Right cardiac atrium (tissue), 5 donors: ENCODE measurements at regions of chr2 and their contacts with region 1.

Region 1: GRCh38 chr2:120343433-120344105 is 2.4 kb upstream of the INHBB start:
- DNase-seq: peak; percentile 87 to 94 (median 94)
- ATAC-seq: peak; percentile 87 to 89
- H3K4me3 ChIP-seq: peak overlapping the region; percentile 71
- H3K27ac ChIP-seq: no peak overlapping the region
- H3K4me1 ChIP-seq: peaks cover 1% of the 10 kb centered on the region
- H3K27me3 ChIP-seq: no peaks in the 10 kb centered on the region

Region 2: GRCh38 chr2:120470041-120470965 is 126.7 kb after region 1 on chr2:
- intact Hi-C with region 1: no loop called
- DNase-seq: peak; percentile 83 to 93 (median 90)
- ATAC-seq: peak; percentile 87 to 95
- H3K4me3 ChIP-seq: no peak overlapping the region
- H3K27ac ChIP-seq: peak overlapping the region; percentile 79
- H3K4me1 ChIP-seq: peaks cover 12% of the 10 kb centered on the region
- H3K27me3 ChIP-seq: no peaks in the 10 kb centered on the region

Region 3: GRCh38 chr2:120511947-120512710 is 168.6 kb after region 1 on chr2:
- intact Hi-C with region 1: loop called in 1 of 4 experiments (anchors 10 kb)
- DNase-seq: no peak
- ATAC-seq: no peak
- H3K4me3 ChIP-seq: no peak overlapping the region
- H3K27ac ChIP-seq: no peak overlapping the region
- H3K4me1 ChIP-seq: peaks cover 6% of the 10 kb centered on the region
- H3K27me3 ChIP-seq: no peaks in the 10 kb centered on the region

Region 4: DNA sequence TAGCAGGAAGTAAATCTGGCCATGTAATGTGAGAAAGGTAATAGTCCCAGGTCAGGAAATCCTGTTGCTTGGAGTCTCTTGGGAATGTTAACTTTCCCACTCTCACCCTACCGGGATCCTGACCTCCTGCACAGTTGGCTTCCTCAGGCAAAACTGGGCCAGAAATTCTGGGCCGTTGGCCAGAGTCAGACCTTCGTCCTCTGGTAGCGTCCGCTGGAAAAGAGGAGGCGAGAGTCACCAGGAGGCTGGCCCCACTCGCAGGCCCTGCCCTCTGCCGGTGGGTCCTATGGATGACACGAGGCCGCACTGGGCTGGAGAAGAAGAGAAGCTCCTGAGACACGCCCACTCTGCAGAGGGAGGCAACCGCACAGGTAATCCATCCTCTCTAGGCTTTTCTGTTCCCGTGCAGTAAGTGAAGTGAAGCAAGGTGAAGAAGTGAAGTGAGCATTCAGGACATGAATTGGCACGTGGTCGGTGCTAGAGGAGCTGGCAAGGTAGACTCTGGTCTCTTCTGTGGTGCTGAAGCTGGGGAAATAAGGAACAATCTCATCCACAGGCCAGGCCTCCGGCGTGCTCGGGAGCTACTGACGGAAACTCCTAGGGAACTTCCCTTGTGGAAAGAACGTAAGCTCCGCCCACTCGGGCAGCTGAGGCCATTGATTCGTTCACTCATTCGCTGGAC is 209.4 kb after region 1 on chr2:
- intact Hi-C with region 1: loop called in 1 of 4 experiments (anchors 5 kb)
- DNase-seq: peak; percentile 91 to 95 (median 94)
- ATAC-seq: peak; percentile 92 to 96
- H3K4me3 ChIP-seq: no peak overlapping the region
- H3K27ac ChIP-seq: no peak overlapping the region
- H3K4me1 ChIP-seq: peaks cover 21% of the 10 kb centered on the region
- H3K27me3 ChIP-seq: no peaks in the 10 kb centered on the region

Region 5: DNA sequence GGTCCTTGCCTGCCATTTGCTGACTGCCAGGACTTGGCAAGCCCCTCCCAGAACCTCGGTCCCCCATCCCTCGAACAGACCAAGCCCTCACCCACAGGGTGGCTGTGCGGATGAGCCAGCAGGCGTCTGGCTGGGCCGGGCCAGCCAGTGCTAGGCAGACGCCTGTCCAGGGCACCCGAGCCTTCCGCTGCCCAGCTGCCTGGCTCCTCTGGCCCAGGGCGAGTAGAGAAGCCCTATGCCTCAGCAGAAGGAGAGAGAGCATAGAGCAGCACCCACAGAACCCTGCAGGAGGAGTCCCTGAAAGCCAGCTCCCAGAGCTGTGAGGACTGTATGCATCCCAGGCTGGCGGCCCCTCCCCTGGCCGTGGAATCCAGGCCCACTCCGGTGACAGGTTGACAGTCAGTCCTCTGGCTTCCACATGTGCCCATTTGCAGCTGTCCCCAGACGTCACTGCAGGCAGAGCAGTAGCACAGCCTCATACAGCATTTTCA is 330.0 kb after region 1 on chr2:
- intact Hi-C with region 1: loop called in 3 of 4 experiments (anchors 2 to 5 kb)
- DNase-seq: peak in 1 of 3 donors; percentile 50
- ATAC-seq: no peak
- H3K4me3 ChIP-seq: no peak overlapping the region
- H3K27ac ChIP-seq: no peak overlapping the region
- H3K4me1 ChIP-seq: no peaks in the 10 kb centered on the region
- H3K27me3 ChIP-seq: no peaks in the 10 kb centered on the region

Region 6: DNA sequence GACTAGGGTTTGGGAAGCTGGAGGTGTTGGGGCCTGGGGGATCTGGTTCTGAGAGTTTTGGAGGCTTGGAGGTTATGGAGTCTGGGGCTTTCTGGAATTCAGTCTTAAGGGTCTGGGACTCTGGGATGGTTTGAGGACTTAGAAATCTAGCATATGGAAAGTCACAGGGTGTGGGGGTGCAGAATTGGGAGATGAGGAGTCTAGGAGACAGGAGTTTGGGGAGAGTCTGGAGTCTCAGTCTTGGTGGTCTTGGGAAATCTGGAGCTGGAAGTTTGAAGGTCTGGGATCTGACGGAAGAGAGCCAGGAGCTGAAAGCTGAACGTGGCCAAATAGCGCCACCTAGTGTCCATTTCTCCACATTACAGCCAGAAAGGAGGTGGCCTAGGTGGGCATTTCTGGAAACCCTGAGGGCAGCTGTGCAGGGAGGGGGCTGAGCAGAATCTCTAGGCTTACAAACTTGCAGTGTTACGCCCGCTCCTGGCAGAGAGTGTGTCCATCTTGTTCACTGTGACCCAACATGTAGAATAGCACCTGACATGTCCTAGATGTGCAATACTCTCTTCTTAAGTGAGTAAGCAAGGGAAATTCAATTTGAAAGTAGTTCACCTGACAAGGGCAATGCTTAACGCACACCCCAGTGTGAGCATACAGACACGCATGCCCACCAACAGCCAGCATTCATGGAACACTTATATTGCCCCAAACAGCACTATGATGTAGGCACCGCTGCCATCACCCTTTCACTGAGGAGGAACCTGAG is 736.6 kb after region 1 on chr2:
- intact Hi-C with region 1: loop called in 2 of 4 experiments (anchors 10 kb)
- DNase-seq: peak in 2 of 3 donors; percentile 38 to 71
- ATAC-seq: peak; percentile 38 to 43
- H3K4me3 ChIP-seq: no peak overlapping the region
- H3K27ac ChIP-seq: no peak overlapping the region
- H3K4me1 ChIP-seq: no peaks in the 10 kb centered on the region
- H3K27me3 ChIP-seq: no peaks in the 10 kb centered on the region